ENCODE measurements at regions of chrX and their contacts with region 1.

Region 1: GRCh38 chrX:64975989-64976672 is at the start of gene ZC4H2:
- DNase-seq: peak; percentile 38
- ATAC-seq: peak; percentile 99
- H3K4me3 Mint-ChIP-seq: peak within 1 kb of the TSS; percentile 94
- H3K27ac Mint-ChIP-seq: peak within 1 kb of the TSS; percentile 76
- H3K4me1 Mint-ChIP-seq: peaks cover 23% of the 10 kb centered on the region
- H3K27me3 Mint-ChIP-seq: no peaks in the 10 kb centered on the region
- CTCF ChIP-seq: no peak
- total RNA-seq, gene ZC4H2: 7.2 and 11.0 TPM in 2 replicates

Region 2: GRCh38 chrX:64205735-64206491 is 770.2 kb before region 1 on chrX:
- CTCF ChIA-PET with region 1: no interaction called
- POLR2A ChIA-PET with region 1: no interaction called
- intact Hi-C with region 1: loop called (anchors 1 kb)
- DNase-seq: peak; percentile 75
- ATAC-seq: peak; percentile 88
- H3K4me3 Mint-ChIP-seq: peak overlapping the region; percentile 92
- H3K27ac Mint-ChIP-seq: peak overlapping the region; percentile 95
- H3K4me1 Mint-ChIP-seq: peaks cover 18% of the 10 kb centered on the region
- H3K27me3 Mint-ChIP-seq: no peaks in the 10 kb centered on the region
- CTCF ChIP-seq: no peak

Region 3: GRCh38 chrX:64394874-64395567 is 581.1 kb before region 1 on chrX and contains the start of gene MTMR8:
- CTCF ChIA-PET with region 1: no interaction called
- POLR2A ChIA-PET with region 1: no interaction called
- intact Hi-C with region 1: loop called (anchors 1 kb)
- DNase-seq: peak; percentile 58
- ATAC-seq: peak; percentile 92
- H3K4me3 Mint-ChIP-seq: peak within 1 kb of the TSS; percentile 95
- H3K27ac Mint-ChIP-seq: peak within 1 kb of the TSS; percentile 82
- H3K4me1 Mint-ChIP-seq: peaks cover 29% of the 10 kb centered on the region
- H3K27me3 Mint-ChIP-seq: no peaks in the 10 kb centered on the region
- CTCF ChIP-seq: no peak
- total RNA-seq, gene MTMR8: 4.3 and 4.7 TPM in 2 replicates

Region 4: DNA sequence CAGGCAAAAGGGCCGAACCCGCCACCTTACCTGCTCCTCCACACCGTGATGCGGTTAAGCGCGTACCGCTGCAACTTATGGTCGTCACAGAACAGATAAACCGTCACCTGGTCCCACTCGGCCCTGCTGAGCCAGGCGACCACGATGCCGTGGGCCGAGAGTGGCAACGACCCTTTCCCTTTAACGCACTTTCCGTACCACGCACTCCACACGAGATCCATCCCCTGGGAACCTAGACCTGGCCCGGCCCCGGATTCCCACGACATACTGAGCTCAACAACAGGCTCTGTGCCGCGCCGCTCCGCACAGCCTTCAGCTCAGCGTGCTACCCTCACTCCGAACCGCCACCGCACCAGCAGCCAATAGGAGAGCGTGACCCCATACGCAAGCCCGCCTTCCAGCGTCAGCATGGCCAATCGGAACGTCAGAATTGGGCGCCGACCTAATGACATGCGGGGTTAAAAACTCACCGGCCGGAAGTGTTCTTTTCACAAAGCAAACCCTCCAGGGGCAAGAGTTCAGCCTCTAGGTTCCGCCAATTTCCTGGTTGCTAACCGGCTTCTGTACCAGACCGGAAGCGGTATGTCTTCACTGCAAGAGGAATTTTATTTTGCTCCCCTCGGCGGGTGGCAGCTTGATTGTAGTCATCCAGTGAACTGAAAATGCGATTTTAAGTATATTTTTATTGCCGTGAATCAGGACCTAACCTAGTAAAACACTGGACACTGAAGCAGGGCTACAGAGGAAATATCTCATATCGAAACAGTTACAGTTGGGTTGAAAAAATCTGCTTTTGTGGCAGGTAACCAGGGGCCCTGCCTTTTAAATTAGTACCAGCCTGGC is 558.5 kb after region 1 on chrX and contains the start of gene LAS1L:
- CTCF ChIA-PET with region 1: no interaction called
- POLR2A ChIA-PET with region 1: interaction called, 4 read pairs
- intact Hi-C with region 1: loop called (anchors 1 kb)
- DNase-seq: peak; percentile 77
- ATAC-seq: peak; percentile 99
- H3K4me3 Mint-ChIP-seq: peak within 1 kb of the TSS; percentile 100
- H3K27ac Mint-ChIP-seq: peak within 1 kb of the TSS; percentile 98
- H3K4me1 Mint-ChIP-seq: peaks cover 23% of the 10 kb centered on the region
- H3K27me3 Mint-ChIP-seq: no peaks in the 10 kb centered on the region
- CTCF ChIP-seq: no peak
- total RNA-seq, gene LAS1L: 51.9 and 54.0 TPM in 2 replicates

Region 5: DNA sequence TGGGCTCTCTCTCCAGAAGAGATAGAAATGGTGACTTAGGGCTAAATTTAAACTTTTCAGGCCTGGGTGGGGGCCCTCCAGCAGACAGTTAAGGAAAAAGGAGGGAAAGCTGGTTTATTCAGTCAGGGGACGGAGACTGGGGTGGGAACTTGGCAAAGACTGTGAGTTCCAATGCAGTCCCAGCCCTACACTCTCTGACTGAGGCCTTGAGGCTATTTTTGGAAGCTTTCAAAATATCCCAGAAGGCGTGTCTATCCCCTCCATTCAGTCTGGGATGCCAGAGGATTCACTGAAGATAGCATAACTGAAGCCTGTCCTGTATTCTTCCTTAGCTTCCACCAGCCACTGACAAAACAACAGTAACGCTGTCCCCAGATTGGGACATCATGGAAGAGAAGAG is 659.2 kb after region 1 on chrX:
- CTCF ChIA-PET with region 1: no interaction called
- POLR2A ChIA-PET with region 1: no interaction called
- intact Hi-C with region 1: no loop called
- DNase-seq: no peak
- ATAC-seq: no peak
- H3K4me3 Mint-ChIP-seq: no peak overlapping the region
- H3K27ac Mint-ChIP-seq: no peak overlapping the region
- H3K4me1 Mint-ChIP-seq: no peaks in the 10 kb centered on the region
- H3K27me3 Mint-ChIP-seq: no peaks in the 10 kb centered on the region
- CTCF ChIP-seq: no peak